WTC11 (cell line): ENCODE measurements at regions of chr7 and their contacts with region 1.

Region 1: DNA sequence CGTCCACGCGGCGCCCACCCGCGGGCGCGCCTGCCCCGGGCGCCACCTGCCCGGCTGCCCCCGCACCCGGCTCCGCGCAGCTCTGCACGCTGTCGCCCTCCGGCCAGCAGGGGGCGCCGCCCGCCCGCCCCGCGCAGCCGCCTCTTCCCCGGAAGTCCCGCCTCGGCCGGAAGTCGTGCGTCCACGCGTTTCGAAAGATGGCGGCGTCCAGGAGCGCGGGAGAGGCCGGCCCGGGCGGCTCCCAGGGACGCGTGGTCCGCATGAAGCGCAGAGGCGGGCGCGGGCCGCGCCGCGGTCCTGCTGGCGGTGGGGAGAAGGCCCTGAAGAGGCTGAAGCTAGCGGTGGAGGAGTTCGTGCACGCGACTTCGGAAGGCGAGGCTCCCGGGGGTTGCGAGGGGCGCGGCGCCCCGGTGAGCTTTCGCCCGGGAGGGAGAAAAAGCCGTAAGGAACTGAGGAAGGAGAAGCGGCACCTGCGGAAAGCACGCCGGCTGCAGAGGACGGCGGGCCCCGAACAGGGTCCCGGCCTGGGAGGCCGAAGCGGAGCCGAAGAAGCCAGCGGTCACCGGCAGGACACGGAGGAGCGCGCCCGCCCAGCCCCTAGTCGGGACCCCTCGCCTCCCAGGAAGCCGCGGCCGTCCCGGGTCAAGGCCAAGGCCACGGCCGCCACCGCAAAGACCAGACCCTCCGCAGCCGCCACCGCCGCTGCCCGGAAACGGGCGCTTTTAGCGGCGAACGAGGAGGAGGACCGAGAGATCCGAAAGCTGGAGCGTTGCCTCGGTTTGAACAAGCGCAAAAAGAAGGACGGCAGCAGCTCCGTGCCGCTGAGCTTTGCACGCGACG is at the start of gene NOM1:
- DNase-seq: peak; percentile 88
- ATAC-seq: peak; percentile 70
- H3K4me3 Mint-ChIP-seq: peak within 1 kb of the TSS; percentile 97
- H3K27ac Mint-ChIP-seq: peak within 1 kb of the TSS; percentile 70
- H3K4me1 Mint-ChIP-seq: peaks cover 31% of the 10 kb centered on the region
- H3K27me3 Mint-ChIP-seq: peaks cover 4% of the 10 kb centered on the region
- CTCF ChIP-seq: peak; percentile 83
- total RNA-seq, gene NOM1: 26.0 to 38.5 TPM (median 27.6 TPM) in 3 replicates

Region 2: DNA sequence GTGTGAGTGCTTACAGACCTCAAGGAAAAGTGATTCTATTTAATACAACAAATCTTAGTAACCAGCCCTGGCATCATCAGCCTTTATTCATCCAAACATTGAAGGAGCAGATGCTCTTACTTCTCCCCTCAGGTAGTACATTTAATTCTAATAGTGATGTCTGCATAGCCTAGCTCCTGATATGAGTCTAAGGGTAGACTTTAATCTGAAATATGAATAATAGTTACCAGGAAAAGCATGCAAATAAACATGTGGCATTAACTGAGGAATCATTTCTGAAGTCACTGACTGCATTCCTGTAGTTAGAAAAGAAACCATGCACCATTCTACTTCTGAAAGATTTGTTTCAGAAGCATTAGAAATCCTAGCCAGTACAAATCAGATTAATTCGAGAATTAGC is 31.1 kb before region 1 on chr7:
- CTCF ChIA-PET with region 1: no interaction called
- POLR2A ChIA-PET with region 1: no interaction called
- DNase-seq: no peak
- ATAC-seq: no peak
- H3K4me3 Mint-ChIP-seq: no peak overlapping the region
- H3K27ac Mint-ChIP-seq: no peak overlapping the region
- H3K4me1 Mint-ChIP-seq: no peaks in the 10 kb centered on the region
- H3K27me3 Mint-ChIP-seq: no peaks in the 10 kb centered on the region
- CTCF ChIP-seq: no peak

Region 3: DNA sequence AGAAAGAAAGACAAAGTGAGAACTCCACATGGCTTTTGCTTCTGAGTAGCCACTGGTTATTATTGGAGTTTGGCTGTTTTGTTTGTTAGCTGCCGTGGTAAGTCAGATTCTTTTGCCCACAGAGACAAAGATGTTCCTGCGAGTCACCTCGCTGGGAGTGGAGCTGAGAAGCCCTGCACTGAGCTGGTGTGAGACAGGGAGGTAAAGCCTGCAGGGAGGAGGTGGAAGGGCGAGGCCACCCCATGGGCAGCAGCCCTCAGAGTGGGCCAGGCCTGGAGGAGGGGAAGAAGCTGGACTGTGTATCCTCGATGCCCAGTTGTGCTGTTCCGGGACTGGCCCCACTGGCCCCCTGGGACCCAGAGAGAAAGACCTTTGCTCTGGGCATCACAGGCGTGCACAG is 14.5 kb before region 1 on chr7:
- CTCF ChIA-PET with region 1: interaction called, 10 read pairs
- POLR2A ChIA-PET with region 1: no interaction called
- DNase-seq: no peak
- ATAC-seq: no peak
- H3K4me3 Mint-ChIP-seq: no peak overlapping the region
- H3K27ac Mint-ChIP-seq: no peak overlapping the region
- H3K4me1 Mint-ChIP-seq: peaks cover 6% of the 10 kb centered on the region
- H3K27me3 Mint-ChIP-seq: no peaks in the 10 kb centered on the region
- CTCF ChIP-seq: no peak

Region 4: GRCh38 chr7:157013602-157014549 is 64.1 kb after region 1 on chr7:
- CTCF ChIA-PET with region 1: interaction called, 14 read pairs
- POLR2A ChIA-PET with region 1: no interaction called
- DNase-seq: peak; percentile 46
- ATAC-seq: peak; percentile 35
- H3K4me3 Mint-ChIP-seq: peak overlapping the region; percentile 18; the same call in 1 of the 2 replicates
- H3K27ac Mint-ChIP-seq: no peak overlapping the region
- H3K4me1 Mint-ChIP-seq: peaks cover 62% of the 10 kb centered on the region
- H3K27me3 Mint-ChIP-seq: peaks cover 90% of the 10 kb centered on the region
- CTCF ChIP-seq: no peak

Region 5: GRCh38 chr7:157056246-157056645 is 106.5 kb after region 1 on chr7:
- CTCF ChIA-PET with region 1: no interaction called
- POLR2A ChIA-PET with region 1: no interaction called
- DNase-seq: no peak
- ATAC-seq: peak; percentile 81
- H3K4me3 Mint-ChIP-seq: no peak overlapping the region
- H3K27ac Mint-ChIP-seq: no peak overlapping the region
- H3K4me1 Mint-ChIP-seq: no peaks in the 10 kb centered on the region
- H3K27me3 Mint-ChIP-seq: no peaks in the 10 kb centered on the region; the same call in none of the 2 replicates
- CTCF ChIP-seq: no peak